ENCODE measurements at regions of chr9 and their contacts with region 1.

Region 1: GRCh38 chr9:122125158-122125508 is 32.0 kb upstream of the TTLL11 start:
- DNase-seq: peak; percentile 84
- ATAC-seq: peak; percentile 59
- H3K4me3 Mint-ChIP-seq: peak overlapping the region; percentile 73
- H3K27ac Mint-ChIP-seq: no peak overlapping the region
- H3K4me1 Mint-ChIP-seq: peaks cover 22% of the 10 kb centered on the region
- H3K27me3 Mint-ChIP-seq: peaks cover 38% of the 10 kb centered on the region
- CTCF ChIP-seq: peak; percentile 88

Region 2: DNA sequence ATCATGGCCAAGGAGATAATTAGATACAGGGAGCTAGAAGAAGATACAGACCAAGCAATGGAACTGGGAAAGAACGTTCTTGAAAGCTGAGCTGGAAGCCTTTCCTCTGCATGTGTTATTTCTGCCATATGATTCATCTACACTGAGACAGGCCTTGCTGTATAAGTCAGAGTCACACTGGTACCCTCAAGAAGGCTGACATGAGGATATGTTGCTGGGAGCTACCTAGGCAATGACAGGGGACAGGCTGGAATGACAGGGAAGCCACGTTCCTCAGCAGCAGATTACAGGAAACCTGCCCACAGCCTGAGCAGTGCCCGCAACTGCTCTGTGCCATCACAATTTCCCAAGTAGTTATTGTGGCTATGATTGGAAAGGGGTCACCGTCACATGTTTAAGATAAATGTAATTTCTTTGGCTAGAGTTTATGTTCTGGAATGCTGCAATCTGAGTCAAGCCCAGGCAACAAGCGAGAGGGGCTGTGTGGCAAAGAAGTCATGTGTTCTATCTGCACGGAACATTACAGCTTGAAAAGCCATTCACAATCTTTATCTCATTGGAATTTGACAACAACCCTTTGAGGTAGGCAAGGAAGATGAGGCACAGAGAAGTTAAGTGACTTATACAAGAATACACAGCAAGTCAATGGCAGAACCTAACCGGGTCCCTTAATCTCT is 140.3 kb before region 1 on chr9:
- CTCF ChIA-PET with region 1: no interaction called
- POLR2A ChIA-PET with region 1: no interaction called
- DNase-seq: no peak
- ATAC-seq: no peak
- H3K4me3 Mint-ChIP-seq: no peak overlapping the region
- H3K27ac Mint-ChIP-seq: no peak overlapping the region
- H3K4me1 Mint-ChIP-seq: no peaks in the 10 kb centered on the region
- H3K27me3 Mint-ChIP-seq: peaks cover 49% of the 10 kb centered on the region
- CTCF ChIP-seq: no peak

Region 3: GRCh38 chr9:122084026-122084675 is 41.0 kb before region 1 on chr9:
- CTCF ChIA-PET with region 1: no interaction called
- POLR2A ChIA-PET with region 1: no interaction called
- DNase-seq: no peak
- ATAC-seq: no peak
- H3K4me3 Mint-ChIP-seq: no peak overlapping the region
- H3K27ac Mint-ChIP-seq: no peak overlapping the region
- H3K4me1 Mint-ChIP-seq: no peaks in the 10 kb centered on the region
- H3K27me3 Mint-ChIP-seq: no peaks in the 10 kb centered on the region; the same call in 1 of the 2 replicates
- CTCF ChIP-seq: no peak

Region 4: DNA sequence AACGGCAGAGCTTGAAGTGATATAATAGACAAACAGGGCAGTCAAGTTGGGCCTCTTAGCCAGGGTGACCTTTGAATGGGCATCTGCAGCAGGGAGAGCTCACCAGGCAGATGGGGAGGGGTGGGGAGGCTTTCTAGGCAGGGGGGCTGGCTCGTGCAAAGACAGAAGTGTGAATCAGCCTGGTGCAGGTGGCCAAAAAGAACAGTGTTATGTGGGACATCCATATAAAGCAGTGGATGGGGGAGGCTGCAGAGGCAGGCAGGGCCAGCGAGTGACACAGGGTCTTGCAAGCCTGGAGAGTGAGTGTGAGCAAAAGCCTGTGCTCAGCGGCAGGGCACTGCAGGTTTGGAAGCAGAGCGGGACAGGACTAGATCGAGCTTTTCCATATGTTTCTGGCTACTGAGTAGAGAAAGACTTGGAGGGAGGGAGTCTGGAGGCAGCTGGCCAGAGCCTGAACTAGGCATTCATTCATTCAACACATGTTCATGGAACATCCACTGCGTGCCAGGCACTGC is 17.8 kb before region 1 on chr9:
- CTCF ChIA-PET with region 1: interaction called, 33 read pairs
- POLR2A ChIA-PET with region 1: interaction called, 3 read pairs
- DNase-seq: no peak
- ATAC-seq: no peak
- H3K4me3 Mint-ChIP-seq: no peak overlapping the region
- H3K27ac Mint-ChIP-seq: no peak overlapping the region
- H3K4me1 Mint-ChIP-seq: peaks cover 12% of the 10 kb centered on the region
- H3K27me3 Mint-ChIP-seq: no peaks in the 10 kb centered on the region; the same call in 1 of the 2 replicates
- CTCF ChIP-seq: no peak

Region 5: GRCh38 chr9:122172131-122172530 is 47.0 kb after region 1 on chr9:
- CTCF ChIA-PET with region 1: interaction called, 17 read pairs
- POLR2A ChIA-PET with region 1: no interaction called
- DNase-seq: no peak
- ATAC-seq: no peak
- H3K4me3 Mint-ChIP-seq: no peak overlapping the region
- H3K27ac Mint-ChIP-seq: no peak overlapping the region
- H3K4me1 Mint-ChIP-seq: peaks cover 2% of the 10 kb centered on the region; the same call in 1 of the 2 replicates
- H3K27me3 Mint-ChIP-seq: peaks cover 21% of the 10 kb centered on the region
- CTCF ChIP-seq: no peak

Region 6: DNA sequence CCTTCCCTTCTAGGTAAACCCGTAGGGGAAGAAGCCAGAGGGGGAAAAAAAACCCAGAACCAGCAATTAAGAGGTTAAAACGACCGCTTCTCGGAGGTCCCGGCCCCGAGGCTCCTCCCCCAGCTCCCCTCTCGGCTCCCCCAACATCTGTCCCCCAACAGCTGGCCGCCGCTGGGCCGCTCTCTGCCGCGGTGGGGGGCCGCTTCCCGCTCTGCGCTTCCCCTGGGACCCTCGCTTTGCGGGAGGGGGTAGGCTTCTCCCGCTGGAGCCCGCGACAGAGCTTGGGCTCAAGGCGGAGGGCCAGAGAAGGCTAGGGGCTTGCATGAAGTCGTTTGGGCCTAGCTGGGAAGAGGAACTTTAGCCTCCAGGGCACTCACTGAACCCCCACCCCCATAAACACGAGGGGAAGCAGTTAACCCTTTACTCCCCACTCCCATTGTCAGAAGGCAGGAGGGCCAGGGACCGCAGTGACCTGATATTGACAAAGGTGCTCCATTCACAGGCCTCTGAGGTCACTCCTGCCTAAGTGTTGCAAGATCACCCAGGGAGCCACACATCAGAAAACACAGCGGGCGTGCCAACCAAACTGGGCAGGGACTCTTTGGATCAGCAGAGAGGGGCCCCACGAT is 96.2 kb after region 1 on chr9:
- CTCF ChIA-PET with region 1: interaction called, 39 read pairs
- POLR2A ChIA-PET with region 1: interaction called, 3 read pairs
- DNase-seq: peak; percentile 64
- ATAC-seq: peak; percentile 11
- H3K4me3 Mint-ChIP-seq: peak overlapping the region; percentile 64
- H3K27ac Mint-ChIP-seq: no peak overlapping the region
- H3K4me1 Mint-ChIP-seq: peaks cover 60% of the 10 kb centered on the region
- H3K27me3 Mint-ChIP-seq: peaks cover 100% of the 10 kb centered on the region
- CTCF ChIP-seq: no peak

Region 7: GRCh38 chr9:122350638-122351355 is 225.7 kb after region 1 on chr9:
- CTCF ChIA-PET with region 1: interaction called, 366 read pairs
- POLR2A ChIA-PET with region 1: interaction called, 3 read pairs
- DNase-seq: peak; percentile 90
- ATAC-seq: peak; percentile 77
- H3K4me3 Mint-ChIP-seq: no peak overlapping the region
- H3K27ac Mint-ChIP-seq: no peak overlapping the region
- H3K4me1 Mint-ChIP-seq: peaks cover 20% of the 10 kb centered on the region
- H3K27me3 Mint-ChIP-seq: peaks cover 34% of the 10 kb centered on the region
- CTCF ChIP-seq: peak; percentile 86